ENCODE measurements at regions of chr20 and their contacts with region 1.

Region 1: DNA sequence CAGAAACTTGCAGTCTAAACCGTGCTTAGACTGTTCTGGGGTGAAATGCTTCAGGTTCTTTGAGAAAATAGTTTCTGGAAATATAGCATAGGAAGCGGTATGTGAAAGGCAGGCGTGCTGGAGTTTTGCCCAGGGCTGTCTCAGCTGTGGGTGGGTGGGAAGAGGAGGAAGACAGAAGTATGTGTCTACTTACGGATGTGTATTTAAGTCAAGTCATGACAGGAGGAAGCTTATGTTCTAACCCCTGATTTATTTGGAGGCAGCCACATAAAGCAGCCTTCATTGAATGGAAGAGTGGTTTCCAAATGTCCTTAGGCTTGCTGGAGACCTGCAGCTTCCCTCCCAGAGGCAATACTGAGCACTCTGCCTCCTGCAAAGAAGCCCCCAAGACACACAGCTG is 345.8 kb upstream of the PRND start:
- DNase-seq: no peak
- H3K4me3 ChIP-seq: no peak overlapping the region
- H3K27ac ChIP-seq: no peak overlapping the region
- H3K4me1 ChIP-seq: no peaks in the 10 kb centered on the region
- H3K27me3 ChIP-seq: no peaks in the 10 kb centered on the region
- CTCF ChIP-seq: no peak
- EP300 ChIP-seq: no peak
- POLR2A ChIP-seq: no peak

Region 2: GRCh38 chr20:4295226-4295625 is 80.7 kb before region 1 on chr20:
- intact Hi-C with region 1: no loop called
- DNase-seq: no peak
- H3K4me3 ChIP-seq: no peak overlapping the region
- H3K27ac ChIP-seq: no peak overlapping the region
- H3K4me1 ChIP-seq: no peaks in the 10 kb centered on the region
- H3K27me3 ChIP-seq: no peaks in the 10 kb centered on the region
- CTCF ChIP-seq: no peak
- EP300 ChIP-seq: no peak
- POLR2A ChIP-seq: no peak

Region 3: DNA sequence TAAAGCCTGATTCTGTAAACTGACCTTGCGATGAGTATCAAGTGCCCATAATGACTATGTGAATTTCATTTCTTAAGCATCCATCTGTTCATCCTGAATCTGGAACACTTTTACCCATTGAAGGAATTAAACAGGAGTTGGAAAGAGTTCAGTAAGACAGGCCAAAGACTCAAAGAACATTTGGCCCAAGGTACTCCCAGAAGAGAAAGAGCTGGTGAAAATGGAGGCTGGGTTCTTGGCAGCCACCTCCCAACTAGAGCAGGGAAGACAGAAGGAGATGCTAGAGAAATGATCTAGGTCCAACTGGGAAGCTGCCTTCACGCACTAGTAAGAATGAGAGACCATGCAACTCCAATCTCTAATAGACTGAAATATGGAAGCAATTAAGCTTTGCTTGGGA is 69.7 kb before region 1 on chr20:
- intact Hi-C with region 1: loop called in 1 of 4 experiments (anchors 2 kb)
- DNase-seq: no peak
- H3K4me3 ChIP-seq: no peak overlapping the region
- H3K27ac ChIP-seq: no peak overlapping the region
- H3K4me1 ChIP-seq: no peaks in the 10 kb centered on the region
- H3K27me3 ChIP-seq: no peaks in the 10 kb centered on the region
- CTCF ChIP-seq: no peak
- EP300 ChIP-seq: no peak
- POLR2A ChIP-seq: no peak

Measured in ovary (tissue), 10 donors.